ENCODE measurements at regions of chr9 and their contacts with region 1.

Region 1: DNA sequence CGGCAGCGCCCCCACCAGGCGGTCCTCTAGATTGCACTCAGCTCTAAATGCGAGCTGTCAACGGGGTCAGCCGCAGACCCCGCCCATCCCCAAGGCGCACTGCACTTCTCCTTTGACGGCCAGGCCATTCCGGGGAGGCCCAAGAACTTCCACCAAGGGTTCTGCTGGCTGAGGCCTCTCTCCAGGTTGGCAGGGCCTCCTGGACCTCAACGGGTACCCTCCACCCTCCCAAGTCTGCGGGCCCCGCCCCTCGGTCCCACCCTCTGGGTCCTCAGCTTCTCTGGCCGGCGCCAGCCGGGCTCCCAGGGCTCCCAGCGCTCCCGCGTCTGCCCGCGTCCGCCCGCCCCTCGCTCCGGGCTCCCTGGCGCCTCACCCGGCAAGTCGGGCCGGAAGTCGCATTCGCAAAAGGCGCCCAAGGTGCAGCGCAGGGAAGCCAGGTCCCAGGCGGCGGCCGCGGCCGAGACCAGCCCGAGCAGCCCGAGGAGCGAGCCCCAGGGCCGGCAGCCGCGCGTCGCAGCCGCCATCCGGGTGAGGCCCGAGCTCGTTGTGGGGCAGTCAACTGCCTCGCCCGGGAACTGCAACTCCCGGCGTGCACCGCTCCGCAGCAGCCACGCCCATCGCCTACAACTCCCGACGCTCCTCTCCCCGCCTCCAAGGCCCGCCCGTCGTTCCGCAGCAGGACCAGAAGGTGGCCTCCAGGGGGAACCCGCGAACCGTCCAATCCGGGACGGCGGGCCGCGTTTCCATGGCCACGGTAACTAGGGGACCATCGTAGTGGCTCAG is at the start of gene TOR2A:
- DNase-seq: peak; percentile 98
- H3K4me3 Mint-ChIP-seq: peak within 1 kb of the TSS; percentile 78
- H3K27ac Mint-ChIP-seq: peak within 1 kb of the TSS; percentile 86
- H3K4me1 Mint-ChIP-seq: peaks cover 13% of the 10 kb centered on the region
- H3K27me3 Mint-ChIP-seq: no peaks in the 10 kb centered on the region
- total RNA-seq, gene TOR2A: 11.8 to 12.7 TPM

Region 2: DNA sequence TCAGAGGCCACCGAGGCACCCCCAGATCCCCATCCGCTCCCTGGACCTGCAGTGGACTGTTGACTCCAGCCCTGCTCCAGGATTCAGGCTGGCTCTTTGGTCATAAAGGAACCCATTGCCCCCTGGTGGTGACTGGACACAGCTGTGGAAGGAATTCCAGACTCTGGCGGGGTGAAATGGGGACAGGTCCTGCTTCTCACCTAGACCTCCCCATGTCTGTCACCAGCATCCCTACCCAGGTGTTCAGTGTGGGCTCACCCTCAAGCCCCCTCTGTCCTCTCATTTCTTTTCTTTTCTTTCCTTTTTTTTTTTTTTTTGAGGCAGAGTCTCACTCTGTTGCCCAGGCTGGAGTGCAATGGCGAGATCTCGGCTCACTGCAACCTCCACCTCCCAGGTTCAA is 148.4 kb before region 1 on chr9:
- CTCF ChIA-PET with region 1: interaction called, 48 read pairs
- intact Hi-C with region 1: loop called (anchors 1 kb)
- DNase-seq: peak; percentile 78
- H3K4me3 Mint-ChIP-seq: no peak overlapping the region
- H3K27ac Mint-ChIP-seq: no peak overlapping the region
- H3K4me1 Mint-ChIP-seq: peaks cover 5% of the 10 kb centered on the region
- H3K27me3 Mint-ChIP-seq: peaks cover 11% of the 10 kb centered on the region

Region 3: DNA sequence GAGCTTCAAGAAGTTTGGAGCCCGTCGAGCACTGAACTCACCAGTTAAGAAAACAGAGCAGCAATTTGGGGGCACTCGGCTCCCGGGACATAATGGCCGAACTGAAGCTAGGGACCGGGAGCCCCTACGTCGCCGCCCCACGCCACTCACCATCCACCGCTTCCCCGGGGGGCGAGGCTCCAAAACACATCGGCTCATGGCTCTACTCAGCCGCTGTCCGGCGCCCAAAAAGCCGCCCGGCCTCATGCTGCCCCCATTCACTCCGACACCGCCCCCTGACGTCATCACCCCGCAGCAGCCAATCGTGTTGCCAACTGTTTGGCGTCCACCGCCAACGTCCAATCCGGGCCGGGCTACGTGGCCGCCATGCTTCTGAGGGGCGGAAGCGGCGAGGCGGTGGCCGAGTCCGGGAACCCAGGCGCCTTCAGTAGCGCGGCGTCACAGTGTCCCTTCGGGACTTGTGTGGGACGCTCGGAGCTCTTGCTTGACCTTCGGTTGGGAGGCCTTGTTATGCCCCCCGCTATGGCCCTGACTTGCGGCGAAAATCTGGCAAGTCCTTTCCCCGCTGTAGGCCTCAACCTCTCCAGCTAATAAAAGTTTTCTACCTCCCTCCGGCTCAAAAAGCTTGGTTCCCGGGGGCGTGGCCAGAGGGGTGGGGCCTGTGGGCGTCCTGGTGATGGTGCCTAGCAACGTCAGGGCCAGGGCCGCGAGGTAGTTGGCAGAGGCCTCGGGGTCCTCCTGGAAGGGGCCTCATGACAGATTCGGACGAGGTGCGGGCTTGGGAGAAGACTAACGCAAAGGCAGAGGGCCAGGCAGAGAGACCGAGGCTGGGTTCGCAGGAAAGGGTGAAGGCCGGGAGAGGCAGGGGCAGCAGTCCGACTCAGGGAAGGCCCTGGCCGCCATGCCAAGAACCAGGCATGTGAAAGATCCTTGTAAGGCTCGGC is 19.3 kb before region 1 on chr9 and contains the starts of genes PTRH1 and TTC16:
- CTCF ChIA-PET with region 1: interaction called, 10 read pairs
- intact Hi-C with region 1: loop called (anchors 1 kb)
- DNase-seq: peak; percentile 98
- H3K4me3 Mint-ChIP-seq: peak within 1 kb of the TSS; percentile 97
- H3K27ac Mint-ChIP-seq: peak within 1 kb of the TSS; percentile 84
- H3K4me1 Mint-ChIP-seq: peaks cover 41% of the 10 kb centered on the region
- H3K27me3 Mint-ChIP-seq: no peaks in the 10 kb centered on the region
- total RNA-seq, gene PTRH1: 23.3 to 24.1 TPM
- total RNA-seq, gene TTC16: 0.50 to 0.79 TPM

Region 4: DNA sequence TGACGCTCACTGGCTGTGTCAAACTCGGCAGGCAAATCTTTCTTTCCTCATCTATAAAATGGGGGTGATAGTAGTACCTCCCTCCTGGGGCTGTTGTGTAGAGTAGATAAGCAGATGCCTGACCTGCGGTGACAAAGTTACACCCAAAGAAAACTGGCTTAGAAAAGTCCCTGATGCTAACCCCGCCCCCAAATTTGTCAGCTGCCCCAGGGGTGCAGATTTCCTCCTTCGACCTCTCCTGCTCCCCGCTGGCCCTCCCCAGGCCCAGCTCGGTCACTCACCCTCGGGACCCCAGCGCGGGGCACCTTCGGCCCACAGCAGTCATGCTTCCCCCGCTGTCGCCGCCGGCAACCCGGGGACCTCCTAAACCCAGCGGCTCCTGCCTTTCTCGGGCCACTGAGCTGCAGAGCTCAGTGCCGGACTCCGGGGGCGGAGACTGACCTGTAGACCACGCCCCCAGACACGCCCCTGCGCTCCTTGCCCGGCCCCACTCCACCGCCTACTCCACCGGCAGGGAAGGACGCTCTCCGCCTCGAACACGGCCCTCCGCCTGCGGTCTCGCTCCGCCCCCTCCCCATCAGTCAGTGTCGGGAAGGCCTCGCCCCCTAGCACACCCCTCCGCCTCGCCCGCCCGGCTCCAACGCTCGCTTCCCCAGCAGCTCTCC is 36.1 kb after region 1 on chr9:
- CTCF ChIA-PET with region 1: interaction called, 16 read pairs
- intact Hi-C with region 1: loop called (anchors 1 kb)
- DNase-seq: peak; percentile 99
- H3K4me3 Mint-ChIP-seq: peak overlapping the region; percentile 90
- H3K27ac Mint-ChIP-seq: peak overlapping the region; percentile 91
- H3K4me1 Mint-ChIP-seq: peaks cover 62% of the 10 kb centered on the region
- H3K27me3 Mint-ChIP-seq: no peaks in the 10 kb centered on the region

Region 5: GRCh38 chr9:127802576-127803443 is 67.9 kb after region 1 on chr9 and contains the start of gene FPGS:
- CTCF ChIA-PET with region 1: interaction called, 8 read pairs
- intact Hi-C with region 1: loop called (anchors 1 kb)
- DNase-seq: peak; percentile 92
- H3K4me3 Mint-ChIP-seq: peak within 1 kb of the TSS; percentile 96
- H3K27ac Mint-ChIP-seq: peak within 1 kb of the TSS; percentile 84
- H3K4me1 Mint-ChIP-seq: peaks cover 29% of the 10 kb centered on the region
- H3K27me3 Mint-ChIP-seq: no peaks in the 10 kb centered on the region
- total RNA-seq, gene FPGS: 67.8 to 73.0 TPM